MCF 10A (cell line): ENCODE measurements at regions of chr1 and their contacts with region 1.

Region 1: GRCh38 chr1:163137556-163138265 is 65.0 kb downstream of the RGS5 start:
- DNase-seq: no peak
- H3K4me3 Mint-ChIP-seq: no peak overlapping the region
- H3K27ac Mint-ChIP-seq: no peak overlapping the region
- H3K4me1 Mint-ChIP-seq: no peaks in the 10 kb centered on the region
- H3K27me3 Mint-ChIP-seq: no peaks in the 10 kb centered on the region
- CTCF ChIP-seq: no peak

Region 2: GRCh38 chr1:163106364-163106987 is 31.2 kb before region 1 on chr1:
- CTCF ChIA-PET with region 1: interaction called, 4 read pairs
- POLR2A ChIA-PET with region 1: no interaction called
- intact Hi-C with region 1: loop called (anchors 5 kb)
- DNase-seq: peak; percentile 18
- H3K4me3 Mint-ChIP-seq: no peak overlapping the region
- H3K27ac Mint-ChIP-seq: no peak overlapping the region
- H3K4me1 Mint-ChIP-seq: no peaks in the 10 kb centered on the region
- H3K27me3 Mint-ChIP-seq: no peaks in the 10 kb centered on the region
- CTCF ChIP-seq: no peak

Region 3: GRCh38 chr1:163205513-163205912 is 67.8 kb after region 1 on chr1:
- CTCF ChIA-PET with region 1: no interaction called
- POLR2A ChIA-PET with region 1: no interaction called
- intact Hi-C with region 1: no loop called
- DNase-seq: no peak
- H3K4me3 Mint-ChIP-seq: no peak overlapping the region
- H3K27ac Mint-ChIP-seq: no peak overlapping the region
- H3K4me1 Mint-ChIP-seq: peaks cover 9% of the 10 kb centered on the region
- H3K27me3 Mint-ChIP-seq: no peaks in the 10 kb centered on the region
- CTCF ChIP-seq: no peak

Region 4: GRCh38 chr1:163295949-163296348 is 158.2 kb after region 1 on chr1:
- CTCF ChIA-PET with region 1: no interaction called
- POLR2A ChIA-PET with region 1: no interaction called
- intact Hi-C with region 1: no loop called
- DNase-seq: peak; percentile 17
- H3K4me3 Mint-ChIP-seq: no peak overlapping the region
- H3K27ac Mint-ChIP-seq: no peak overlapping the region
- H3K4me1 Mint-ChIP-seq: no peaks in the 10 kb centered on the region
- H3K27me3 Mint-ChIP-seq: no peaks in the 10 kb centered on the region
- CTCF ChIP-seq: no peak